Aorta (tissue), 5 donors: ENCODE measurements at regions of chr19 and their contacts with region 1.

Region 1: GRCh38 chr19:19663256-19664038 is at the start of gene ATP13A1:
- DNase-seq: peak; percentile 98
- ATAC-seq: peak; percentile 98
- H3K4me3 ChIP-seq: peak within 1 kb of the TSS; percentile 87 to 96
- H3K27ac ChIP-seq: peak within 1 kb of the TSS in 1 of 2 donors; percentile 55
- H3K4me1 ChIP-seq: peaks cover 0 to 1% of the 10 kb centered on the region in 2 donors
- H3K27me3 ChIP-seq: no peaks in the 10 kb centered on the region
- total RNA-seq, gene ATP13A1: 41.7 to 53.6 TPM

Region 2: GRCh38 chr19:19643158-19644053 is 20.0 kb before region 1 on chr19 and contains the start of gene GMIP:
- intact Hi-C with region 1: loop called in 1 of 2 experiments (anchors 1 kb)
- DNase-seq: peak; percentile 87 to 94
- ATAC-seq: peak; percentile 85
- H3K4me3 ChIP-seq: peak within 1 kb of the TSS; percentile 29 to 60
- H3K27ac ChIP-seq: no peak within 1 kb of the TSS
- H3K4me1 ChIP-seq: no peaks in the 10 kb centered on the region
- H3K27me3 ChIP-seq: no peaks in the 10 kb centered on the region
- total RNA-seq, gene GMIP: 14.9 to 25.6 TPM

Region 3: GRCh38 chr19:19696386-19696785 is 32.9 kb after region 1 on chr19:
- intact Hi-C with region 1: no loop called
- DNase-seq: no peak
- ATAC-seq: no peak
- H3K4me3 ChIP-seq: no peak overlapping the region
- H3K27ac ChIP-seq: no peak overlapping the region
- H3K4me1 ChIP-seq: no peaks in the 10 kb centered on the region
- H3K27me3 ChIP-seq: no peaks in the 10 kb centered on the region

Region 4: GRCh38 chr19:19732579-19733501 is 69.4 kb after region 1 on chr19 and contains the start of gene ZNF14:
- intact Hi-C with region 1: loop called in 1 of 2 experiments (anchors 5 kb)
- DNase-seq: peak; percentile 96
- ATAC-seq: peak; percentile 100
- H3K4me3 ChIP-seq: peak within 1 kb of the TSS; percentile 86 to 92
- H3K27ac ChIP-seq: peak within 1 kb of the TSS in 1 of 2 donors; percentile 38
- H3K4me1 ChIP-seq: no peaks in the 10 kb centered on the region
- H3K27me3 ChIP-seq: no peaks in the 10 kb centered on the region
- total RNA-seq, gene ZNF14: 6.2 to 10.9 TPM

Region 5: GRCh38 chr19:19776041-19777008 is 112.9 kb after region 1 on chr19:
- intact Hi-C with region 1: loop called in 1 of 2 experiments (anchors 5 kb)
- DNase-seq: peak; percentile 99
- ATAC-seq: peak; percentile 100
- H3K4me3 ChIP-seq: peak overlapping the region; percentile 22 to 65
- H3K27ac ChIP-seq: no peak overlapping the region
- H3K4me1 ChIP-seq: peaks cover 0 to 4% of the 10 kb centered on the region in 2 donors
- H3K27me3 ChIP-seq: no peaks in the 10 kb centered on the region